ENCODE measurements at regions of chr12 and their contacts with region 1.

Region 1: DNA sequence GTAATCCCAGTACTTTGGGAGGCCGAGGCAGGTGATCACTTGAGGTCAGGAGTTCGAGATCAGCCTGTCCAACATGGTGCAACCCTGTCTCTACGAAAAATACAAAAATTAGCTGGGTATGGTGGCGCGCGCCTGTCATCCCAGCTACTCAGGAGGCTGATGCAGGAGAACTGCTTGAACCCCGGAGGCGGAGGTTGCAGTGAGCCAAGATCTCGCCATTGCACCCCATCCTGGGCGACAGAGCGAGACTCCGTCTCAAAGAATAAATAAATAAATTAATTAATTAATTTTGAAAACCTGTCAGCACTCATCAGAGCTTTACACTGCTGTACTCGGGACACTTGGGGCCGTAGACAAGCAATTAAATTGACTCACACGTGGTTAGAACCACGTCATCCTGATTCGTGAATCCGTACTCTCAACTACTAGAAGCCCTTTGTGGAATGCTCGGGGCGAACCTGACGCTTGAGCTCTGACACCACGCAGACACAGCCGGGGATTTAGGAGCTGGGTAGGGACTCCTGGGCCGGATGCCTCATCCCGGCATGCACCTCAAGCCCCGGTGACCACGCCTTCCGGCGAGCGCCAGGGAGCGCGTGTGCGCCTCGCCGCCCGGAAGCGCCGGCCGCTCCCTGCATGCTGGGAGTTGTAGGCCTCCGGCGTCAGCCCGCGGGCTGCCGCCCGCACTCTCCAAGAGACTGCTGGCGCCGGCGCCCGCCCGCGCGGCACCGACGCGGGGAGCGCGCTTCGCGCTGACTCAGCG is at the start of gene XPOT:
- DNase-seq: peak; percentile 92
- H3K4me3 Mint-ChIP-seq: peak within 1 kb of the TSS; percentile 95
- H3K27ac Mint-ChIP-seq: peak within 1 kb of the TSS; percentile 99
- H3K4me1 Mint-ChIP-seq: peaks cover 20% of the 10 kb centered on the region
- H3K27me3 Mint-ChIP-seq: no peaks in the 10 kb centered on the region
- total RNA-seq, gene XPOT: 145 and 146 TPM in 2 replicates

Region 2: GRCh38 chr12:63779498-63780481 is 624.1 kb before region 1 on chr12 and contains the start of gene RXYLT1:
- intact Hi-C with region 1: loop called (anchors 1 kb)
- DNase-seq: peak; percentile 75
- H3K4me3 Mint-ChIP-seq: peak within 1 kb of the TSS; percentile 95
- H3K27ac Mint-ChIP-seq: peak within 1 kb of the TSS; percentile 90
- H3K4me1 Mint-ChIP-seq: peaks cover 18% of the 10 kb centered on the region
- H3K27me3 Mint-ChIP-seq: no peaks in the 10 kb centered on the region
- total RNA-seq, gene RXYLT1: 26.5 and 27.3 TPM in 2 replicates

Region 3: DNA sequence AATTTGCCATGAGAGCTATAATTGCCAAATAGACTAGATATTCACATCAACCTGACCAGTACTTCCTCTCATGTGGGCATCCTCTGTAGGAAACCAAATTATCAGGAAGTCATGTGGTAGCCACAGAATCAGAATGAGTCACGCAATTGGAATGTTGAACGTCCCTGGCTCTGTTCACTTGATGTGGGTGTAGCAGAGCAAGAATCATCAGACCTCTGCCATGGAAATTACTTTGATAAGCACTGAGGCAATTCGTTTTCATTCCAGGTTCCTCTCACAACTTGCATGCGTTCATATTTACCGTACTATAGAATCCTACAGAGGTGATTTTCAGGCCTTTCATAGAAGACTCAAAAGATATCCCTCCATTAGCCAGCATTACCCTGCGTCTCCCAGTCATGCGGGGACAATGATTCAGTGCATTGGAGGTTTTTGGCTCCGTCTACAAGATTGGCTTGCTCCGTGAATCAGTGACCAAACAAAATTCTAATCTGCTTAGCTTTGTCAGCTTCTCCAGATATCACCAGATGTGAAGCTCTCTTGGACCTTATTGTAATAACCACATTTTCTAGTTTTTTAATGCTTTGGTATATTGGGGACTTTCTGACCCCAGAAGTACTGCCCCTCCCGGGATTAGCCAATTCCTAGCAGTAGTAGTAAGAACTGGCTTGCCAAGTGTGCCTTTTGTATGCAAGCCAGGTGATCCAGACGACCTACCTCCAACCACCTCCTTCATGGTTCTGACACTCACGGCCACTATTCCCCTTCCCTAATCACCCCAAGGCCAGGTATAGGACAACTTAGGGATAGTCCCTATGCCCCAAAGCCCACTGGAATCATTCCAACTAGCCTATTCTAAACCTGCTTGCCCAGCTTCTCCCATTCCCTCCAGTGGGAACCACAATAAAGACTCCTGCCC is 315.2 kb before region 1 on chr12:
- intact Hi-C with region 1: no loop called
- DNase-seq: no peak
- H3K4me3 Mint-ChIP-seq: no peak overlapping the region
- H3K27ac Mint-ChIP-seq: no peak overlapping the region
- H3K4me1 Mint-ChIP-seq: no peaks in the 10 kb centered on the region
- H3K27me3 Mint-ChIP-seq: peaks cover 2% of the 10 kb centered on the region

Region 4: DNA sequence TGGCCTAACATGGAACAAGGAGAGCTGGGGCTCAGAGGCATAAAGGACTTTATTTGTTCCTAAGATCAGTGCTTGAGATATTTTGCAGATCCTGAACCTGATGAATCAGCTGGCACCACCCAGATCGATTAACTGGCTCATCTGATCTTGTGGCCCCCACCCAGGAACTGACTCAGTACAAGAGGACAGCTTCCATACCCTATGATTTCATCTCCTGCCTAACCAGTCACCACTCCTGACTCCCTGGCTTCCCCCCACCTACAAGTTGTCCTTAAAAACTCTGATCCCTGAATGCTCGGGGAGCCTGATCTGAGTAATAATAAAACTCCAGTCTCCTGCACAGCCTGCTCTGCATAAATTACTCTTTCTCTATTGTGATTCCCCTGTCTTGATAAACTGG is 18.4 kb before region 1 on chr12:
- intact Hi-C with region 1: loop called (anchors 1 kb)
- DNase-seq: no peak
- H3K4me3 Mint-ChIP-seq: peak overlapping the region; percentile 38
- H3K27ac Mint-ChIP-seq: peak overlapping the region; percentile 85
- H3K4me1 Mint-ChIP-seq: peaks cover 30% of the 10 kb centered on the region
- H3K27me3 Mint-ChIP-seq: peaks cover 5% of the 10 kb centered on the region

Region 5: DNA sequence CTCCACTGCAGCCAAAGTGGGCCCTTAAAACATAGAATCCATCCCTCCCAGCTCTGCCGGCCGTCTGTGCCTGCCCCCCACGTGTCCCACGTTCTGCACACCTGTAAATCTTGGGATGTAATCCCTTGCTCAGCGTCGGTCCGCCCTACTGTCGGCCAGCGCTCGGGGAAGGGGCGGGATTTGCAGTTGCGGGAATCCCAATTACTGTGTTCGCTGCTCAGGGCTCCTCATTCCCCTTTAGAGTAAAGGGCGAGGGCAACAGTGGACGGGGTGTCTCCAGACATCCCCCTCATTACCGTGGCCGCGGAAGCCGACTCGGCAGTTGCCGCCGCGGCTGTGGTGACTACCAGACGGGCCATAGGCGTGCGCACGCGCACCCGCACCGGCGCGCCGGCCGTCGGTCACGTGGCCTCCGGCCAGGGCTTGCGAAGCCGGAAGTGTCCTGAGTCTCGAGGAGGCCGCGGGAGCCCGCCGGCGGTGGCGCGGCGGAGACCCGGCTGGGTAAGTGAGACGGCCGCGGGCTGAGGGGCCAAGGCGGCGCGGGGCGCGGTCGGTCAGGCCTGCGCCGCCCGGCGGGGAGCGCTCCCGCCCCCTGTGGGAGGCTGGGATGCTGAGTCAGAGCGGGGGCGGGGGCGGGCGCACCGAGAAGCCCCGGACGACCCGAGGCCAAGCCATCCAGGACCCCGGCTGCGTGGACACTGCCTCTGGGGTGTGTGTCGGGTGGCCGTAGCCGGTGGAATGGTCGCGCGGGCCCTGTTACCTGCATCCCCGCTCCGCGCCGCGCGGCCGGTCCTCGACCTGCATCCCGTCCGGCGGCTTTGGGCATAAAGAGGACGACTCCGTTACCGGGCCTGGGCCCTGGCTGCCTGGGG is 48.0 kb after region 1 on chr12 and contains the start of gene TBK1:
- intact Hi-C with region 1: loop called (anchors 1 kb)
- DNase-seq: peak; percentile 74
- H3K4me3 Mint-ChIP-seq: peak within 1 kb of the TSS; percentile 97
- H3K27ac Mint-ChIP-seq: peak within 1 kb of the TSS; percentile 94
- H3K4me1 Mint-ChIP-seq: peaks cover 47% of the 10 kb centered on the region
- H3K27me3 Mint-ChIP-seq: no peaks in the 10 kb centered on the region
- total RNA-seq, gene TBK1: 33.6 and 42.4 TPM in 2 replicates

Region 6: GRCh38 chr12:64759035-64759901 is 355.4 kb after region 1 on chr12 and contains the start of gene GNS:
- intact Hi-C with region 1: loop called (anchors 1 kb)
- DNase-seq: peak; percentile 95
- H3K4me3 Mint-ChIP-seq: peak within 1 kb of the TSS; percentile 91
- H3K27ac Mint-ChIP-seq: peak within 1 kb of the TSS; percentile 90
- H3K4me1 Mint-ChIP-seq: peaks cover 45% of the 10 kb centered on the region
- H3K27me3 Mint-ChIP-seq: peaks cover 2% of the 10 kb centered on the region
- total RNA-seq, gene GNS: 20.6 and 21.3 TPM in 2 replicates

Measured in activated T-helper 1 cell treated with anti-CD3 and anti-CD28 coated beads, Interleukin-12 subunit alpha, Interleukin-12 subunit beta, Interleukin-2, Interleukin-4 antibody, amounts not matched to agents 30 ng/mL and 10 ng/mL and 1 ng/mL, durations not matched to agents 14 hours and 24 hours and 36 hours (primary cell).